ENCODE measurements at regions of chr1 and their contacts with region 1.

Region 1: DNA sequence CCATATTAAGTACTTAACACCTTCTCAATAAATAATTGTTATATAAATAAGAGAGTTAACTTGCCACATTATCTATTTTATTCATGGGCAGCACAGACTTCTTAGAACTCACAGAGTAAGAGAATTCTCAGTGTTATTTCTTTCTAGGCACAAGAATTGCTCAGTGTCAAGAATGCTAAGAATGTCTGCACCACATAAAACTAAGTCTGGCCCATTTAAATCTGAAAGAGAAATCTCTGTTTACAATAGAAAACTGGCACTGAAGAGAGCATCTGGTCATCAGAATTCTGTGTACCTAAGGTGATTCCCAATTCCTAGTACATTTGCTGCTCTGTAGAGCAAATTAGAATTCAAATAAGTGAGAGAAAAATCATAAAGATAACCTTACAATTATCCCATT is 3.8 kb downstream of the OR10K2 start:
- DNase-seq: no peak
- H3K4me3 ChIP-seq: no peak overlapping the region
- H3K27ac ChIP-seq: no peak overlapping the region
- H3K4me1 ChIP-seq: no peaks in the 10 kb centered on the region
- H3K27me3 ChIP-seq: peaks cover 4% of the 10 kb centered on the region
- CTCF ChIP-seq: no peak

Region 2: GRCh38 chr1:158586942-158587341 is 164.7 kb after region 1 on chr1:
- intact Hi-C with region 1: loop called (anchors 5 kb)
- DNase-seq: no peak
- H3K4me3 ChIP-seq: no peak overlapping the region
- H3K27ac ChIP-seq: no peak overlapping the region
- H3K4me1 ChIP-seq: no peaks in the 10 kb centered on the region
- H3K27me3 ChIP-seq: no peaks in the 10 kb centered on the region
- CTCF ChIP-seq: no peak